ENCODE measurements at regions of chr1 and their contacts with region 1.

Region 1: DNA sequence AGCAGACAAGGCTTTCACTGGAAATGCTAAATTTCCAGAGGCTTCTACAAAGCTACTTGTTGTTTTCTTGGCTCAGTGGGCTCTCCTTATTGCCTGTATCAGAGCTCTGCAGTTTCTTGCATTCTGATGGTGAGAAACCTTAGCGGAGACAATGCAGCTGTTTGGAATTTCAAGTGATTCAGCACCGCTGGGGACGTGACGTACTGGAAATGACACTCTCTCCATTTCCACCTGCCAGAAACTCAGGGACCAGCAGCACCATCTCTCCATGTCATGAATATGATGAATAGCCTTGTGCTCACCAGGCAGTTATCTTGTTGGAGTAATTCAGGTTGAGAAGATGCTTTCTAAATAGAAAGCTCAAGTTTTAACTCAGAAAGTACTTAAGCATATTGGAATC is 497.2 kb upstream of the DEPDC1 start:
- DNase-seq: no peak
- ATAC-seq: no peak

Region 2: DNA sequence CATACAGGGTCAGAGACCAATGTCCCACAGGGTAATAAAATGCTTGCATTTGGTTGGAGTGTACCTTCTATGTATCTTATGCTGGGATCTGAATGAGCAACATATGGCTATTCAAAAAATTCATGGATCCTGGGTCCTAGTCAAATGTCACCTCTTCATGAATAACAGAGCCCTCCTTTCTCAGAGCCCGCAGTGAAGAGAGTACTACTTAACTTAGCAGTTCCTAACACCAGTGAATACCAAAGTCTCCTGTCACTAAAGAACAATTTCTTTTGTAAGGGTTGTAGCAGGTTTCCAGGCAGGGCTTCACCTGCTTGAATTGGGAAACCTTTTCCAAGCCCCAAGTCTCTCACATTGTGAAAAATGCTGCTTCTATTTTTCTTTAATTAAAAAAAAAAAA is 14.2 kb before region 1 on chr1:
- intact Hi-C with region 1: loop called (anchors 1 kb)
- DNase-seq: no peak
- ATAC-seq: no peak

Measured in sciatic nerve (tissue), 2 donors.